Naive thymus-derived CD4-positive, alpha-beta T cell (primary cell): ENCODE measurements at regions of chr2 and their contacts with region 1.

Region 1: GRCh38 chr2:38377050-38377828 is at the start of gene ATL2:
- DNase-seq: peak; percentile 83 to 94 (median 92)
- ATAC-seq: peak; percentile 92
- H3K4me3 ChIP-seq: peak within 1 kb of the TSS; percentile 75
- H3K4me3 Mint-ChIP-seq: peak within 1 kb of the TSS; percentile 93 to 100 (median 97)
- H3K27ac ChIP-seq: peak within 1 kb of the TSS; percentile 98
- H3K27ac Mint-ChIP-seq: peak within 1 kb of the TSS; percentile 87 to 99 (median 95)
- H3K4me1 ChIP-seq: peaks cover 28 to 30% of the 10 kb centered on the region in 2 donors
- H3K4me1 Mint-ChIP-seq: peaks cover 53 to 83% (median 68%) of the 10 kb centered on the region in 7 donors
- H3K27me3 ChIP-seq: no peaks in the 10 kb centered on the region
- H3K27me3 Mint-ChIP-seq: peaks cover 0 to 3% (median 0%) of the 10 kb centered on the region in 5 donors
- total RNA-seq, gene ATL2: 45.5 to 59.5 (median 53.0) TPM

Region 2: DNA sequence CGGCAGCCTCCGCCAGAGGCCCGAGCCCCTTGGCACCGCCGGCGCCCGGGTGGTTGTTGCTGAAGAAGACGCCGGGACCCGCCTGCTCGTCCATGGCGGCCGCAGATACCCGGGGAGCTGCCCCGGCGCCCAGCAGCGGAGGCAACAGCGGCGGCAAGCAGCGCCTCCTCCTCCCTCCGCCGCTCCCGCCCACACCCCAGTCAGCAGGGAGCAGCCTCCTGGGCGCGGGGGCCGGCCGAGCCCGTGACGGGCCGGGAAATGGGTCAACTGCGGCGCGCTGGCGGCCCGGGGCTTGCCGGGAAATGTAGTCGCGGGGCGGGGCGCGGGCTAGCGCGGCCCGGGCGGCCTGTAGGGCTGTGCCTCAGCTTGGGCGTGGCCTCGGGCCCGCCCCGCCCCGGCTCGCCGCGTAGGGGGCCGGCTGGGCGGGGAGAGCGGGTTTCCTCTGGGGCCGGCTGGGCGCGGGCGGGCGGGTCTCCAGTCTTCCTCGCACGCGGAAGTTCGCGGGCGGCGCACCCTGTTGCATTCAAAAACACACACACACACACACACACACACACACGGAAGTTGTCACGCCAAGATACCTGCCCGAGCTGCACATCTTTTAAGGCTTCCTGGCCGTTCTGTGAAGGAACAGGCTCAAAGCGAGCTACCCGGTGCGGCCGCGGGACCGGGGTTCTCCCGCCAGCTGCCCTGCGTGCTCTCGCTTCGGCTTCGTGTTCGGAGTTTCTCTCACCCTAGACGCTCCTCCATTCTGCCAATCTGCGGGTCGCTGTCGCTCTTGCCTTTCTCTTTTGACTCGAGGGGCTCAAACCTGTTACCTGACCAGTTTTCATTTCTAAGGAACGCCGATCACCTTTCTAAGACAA is 1410.6 kb before region 1 on chr2 and contains the start of gene STRN:
- CTCF ChIA-PET with region 1: no interaction called
- POLR2A ChIA-PET with region 1: no interaction called
- intact Hi-C with region 1: loop called in 1 of 2 experiments (anchors 5 kb)
- DNase-seq: peak; percentile 96 to 99 (median 99)
- ATAC-seq: peak; percentile 97
- H3K4me3 ChIP-seq: peak within 1 kb of the TSS; percentile 89
- H3K4me3 Mint-ChIP-seq: peak within 1 kb of the TSS; percentile 92 to 99 (median 98)
- H3K27ac ChIP-seq: peak within 1 kb of the TSS; percentile 90
- H3K27ac Mint-ChIP-seq: peak within 1 kb of the TSS; percentile 96 to 100 (median 98)
- H3K4me1 ChIP-seq: peaks cover 8 to 19% of the 10 kb centered on the region in 2 donors
- H3K4me1 Mint-ChIP-seq: peaks cover 35 to 57% (median 48%) of the 10 kb centered on the region in 7 donors
- H3K27me3 ChIP-seq: no peaks in the 10 kb centered on the region
- H3K27me3 Mint-ChIP-seq: no peaks in the 10 kb centered on the region
- total RNA-seq, gene STRN: 23.0 to 35.0 (median 30.9) TPM

Region 3: DNA sequence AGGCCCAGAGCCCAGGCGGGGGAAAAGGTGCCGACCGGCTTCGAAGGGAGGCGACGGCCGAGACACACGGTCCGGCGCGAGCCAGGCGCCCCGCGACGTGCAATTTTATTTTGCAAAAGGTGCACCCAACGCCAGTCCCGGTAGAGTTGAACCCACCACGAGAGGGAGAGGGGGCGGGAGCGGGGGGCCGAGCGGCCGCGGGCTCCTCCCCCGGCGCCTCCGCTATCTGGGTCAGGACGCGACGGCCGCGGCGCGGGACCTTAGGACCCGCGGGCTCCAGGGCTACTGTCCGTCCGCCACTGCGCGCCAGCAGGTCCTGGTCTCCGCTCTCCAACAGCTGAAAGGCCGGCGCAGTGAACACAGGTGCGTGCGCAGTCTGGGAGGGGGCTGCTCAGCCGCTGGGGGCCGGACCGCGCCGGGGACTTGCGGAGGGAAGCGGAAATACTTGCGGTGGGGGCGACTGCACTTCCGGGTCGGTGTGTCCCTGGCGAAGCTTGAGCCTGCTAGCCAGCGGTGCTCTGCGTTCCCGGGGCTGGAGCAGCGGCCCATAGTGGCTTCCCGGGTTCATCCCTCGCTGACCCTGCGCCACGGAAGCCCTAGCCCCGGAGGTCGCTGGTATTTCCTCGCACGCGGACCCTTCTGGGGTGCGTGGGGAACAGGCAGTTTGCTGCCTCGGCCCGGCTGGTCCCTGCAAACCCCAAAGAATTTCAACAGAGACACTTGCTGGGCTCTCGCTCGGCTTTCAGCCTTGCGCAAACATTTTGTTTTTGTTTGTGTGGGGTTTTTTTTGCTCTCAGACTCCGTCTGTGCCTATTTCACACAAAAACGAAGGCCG is 452.0 kb before region 1 on chr2 and contains the start of gene RMDN2:
- CTCF ChIA-PET with region 1: no interaction called
- POLR2A ChIA-PET with region 1: no interaction called
- intact Hi-C with region 1: loop called in 1 of 2 experiments (anchors 1 kb)
- DNase-seq: peak; percentile 57 to 78 (median 71)
- ATAC-seq: peak; percentile 88
- H3K4me3 ChIP-seq: peak within 1 kb of the TSS; percentile 81
- H3K4me3 Mint-ChIP-seq: peak within 1 kb of the TSS; percentile 89 to 100 (median 98)
- H3K27ac ChIP-seq: peak within 1 kb of the TSS; percentile 73
- H3K27ac Mint-ChIP-seq: peak within 1 kb of the TSS; percentile 67 to 100 (median 96)
- H3K4me1 ChIP-seq: peaks cover 0 to 8% of the 10 kb centered on the region in 2 donors
- H3K4me1 Mint-ChIP-seq: peaks cover 8 to 50% (median 24%) of the 10 kb centered on the region in 7 donors
- H3K27me3 ChIP-seq: no peaks in the 10 kb centered on the region
- H3K27me3 Mint-ChIP-seq: peaks cover 0 to 60% (median 0%) of the 10 kb centered on the region in 5 donors
- total RNA-seq, gene RMDN2: 0.39 to 8.1 (median 5.1) TPM

Region 4: GRCh38 chr2:38336619-38337018 is 40.6 kb before region 1 on chr2:
- CTCF ChIA-PET with region 1: no interaction called
- POLR2A ChIA-PET with region 1: interaction called, 4 read pairs
- intact Hi-C with region 1: loop called in 1 of 2 experiments (anchors 5 kb)
- DNase-seq: no peak
- ATAC-seq: no peak
- H3K4me3 ChIP-seq: no peak overlapping the region
- H3K4me3 Mint-ChIP-seq: no peak overlapping the region
- H3K27ac ChIP-seq: no peak overlapping the region
- H3K27ac Mint-ChIP-seq: no peak overlapping the region
- H3K4me1 ChIP-seq: no peaks in the 10 kb centered on the region
- H3K4me1 Mint-ChIP-seq: peaks cover 0 to 4% (median 0%) of the 10 kb centered on the region in 7 donors
- H3K27me3 ChIP-seq: no peaks in the 10 kb centered on the region
- H3K27me3 Mint-ChIP-seq: no peaks in the 10 kb centered on the region

Region 5: DNA sequence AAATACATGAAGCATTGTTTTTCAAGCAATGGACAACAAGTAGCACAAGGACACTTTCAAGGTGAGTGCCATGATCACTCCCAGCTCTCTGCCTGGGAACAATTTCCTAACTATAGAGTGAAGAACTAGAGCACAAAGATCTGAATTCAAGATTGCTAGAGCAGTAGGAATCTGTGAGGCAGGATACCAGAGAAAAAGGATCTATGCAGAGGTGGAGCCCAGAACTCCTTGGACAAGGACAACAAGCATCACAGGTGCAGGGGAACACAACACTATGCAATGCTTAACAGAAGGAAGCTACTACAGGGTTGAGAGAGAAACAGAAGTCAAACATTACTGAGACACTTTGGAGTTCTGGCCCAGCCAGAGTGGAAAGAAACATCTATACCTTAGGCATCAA is 24.9 kb before region 1 on chr2:
- CTCF ChIA-PET with region 1: no interaction called
- POLR2A ChIA-PET with region 1: no interaction called
- intact Hi-C with region 1: no loop called
- DNase-seq: no peak
- ATAC-seq: no peak
- H3K4me3 ChIP-seq: no peak overlapping the region
- H3K4me3 Mint-ChIP-seq: peak overlapping the region in 2 of 10 donors; percentile 0 to 37
- H3K27ac ChIP-seq: no peak overlapping the region
- H3K27ac Mint-ChIP-seq: peak overlapping the region in 4 of 9 donors; percentile 5 to 88 (median 38)
- H3K4me1 ChIP-seq: peaks cover 0 to 9% of the 10 kb centered on the region in 2 donors
- H3K4me1 Mint-ChIP-seq: peaks cover 19 to 35% (median 30%) of the 10 kb centered on the region in 7 donors
- H3K27me3 ChIP-seq: no peaks in the 10 kb centered on the region
- H3K27me3 Mint-ChIP-seq: no peaks in the 10 kb centered on the region

Region 6: DNA sequence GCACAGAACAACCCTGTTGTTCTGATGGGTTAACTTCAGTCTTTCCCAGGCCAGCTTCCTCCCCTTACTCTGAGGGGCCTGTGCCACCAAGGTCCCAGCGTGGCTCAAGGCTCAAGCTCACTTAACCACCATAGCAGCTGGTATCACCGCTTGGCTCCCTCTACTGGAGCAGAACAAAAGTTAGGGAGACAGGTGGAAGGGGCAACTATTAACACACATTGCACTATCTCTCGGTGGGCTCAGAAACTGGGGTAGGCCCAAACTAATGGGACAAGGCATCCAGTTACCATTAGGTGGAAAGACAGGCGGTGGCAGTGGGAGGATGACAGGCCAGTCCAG is 88.5 kb after region 1 on chr2:
- CTCF ChIA-PET with region 1: no interaction called
- POLR2A ChIA-PET with region 1: interaction called, 3 read pairs
- intact Hi-C with region 1: loop called (anchors 1 kb)
- DNase-seq: peak in 6 of 9 donors; percentile 2 to 23 (median 14)
- ATAC-seq: peak; percentile 45
- H3K4me3 ChIP-seq: no peak overlapping the region
- H3K4me3 Mint-ChIP-seq: no peak overlapping the region
- H3K27ac ChIP-seq: no peak overlapping the region
- H3K27ac Mint-ChIP-seq: peak overlapping the region in 2 of 9 donors; percentile 35 to 66
- H3K4me1 ChIP-seq: no peaks in the 10 kb centered on the region
- H3K4me1 Mint-ChIP-seq: peaks cover 0 to 5% (median 0%) of the 10 kb centered on the region in 7 donors
- H3K27me3 ChIP-seq: no peaks in the 10 kb centered on the region
- H3K27me3 Mint-ChIP-seq: peaks cover 0 to 16% (median 0%) of the 10 kb centered on the region in 5 donors

Region 7: DNA sequence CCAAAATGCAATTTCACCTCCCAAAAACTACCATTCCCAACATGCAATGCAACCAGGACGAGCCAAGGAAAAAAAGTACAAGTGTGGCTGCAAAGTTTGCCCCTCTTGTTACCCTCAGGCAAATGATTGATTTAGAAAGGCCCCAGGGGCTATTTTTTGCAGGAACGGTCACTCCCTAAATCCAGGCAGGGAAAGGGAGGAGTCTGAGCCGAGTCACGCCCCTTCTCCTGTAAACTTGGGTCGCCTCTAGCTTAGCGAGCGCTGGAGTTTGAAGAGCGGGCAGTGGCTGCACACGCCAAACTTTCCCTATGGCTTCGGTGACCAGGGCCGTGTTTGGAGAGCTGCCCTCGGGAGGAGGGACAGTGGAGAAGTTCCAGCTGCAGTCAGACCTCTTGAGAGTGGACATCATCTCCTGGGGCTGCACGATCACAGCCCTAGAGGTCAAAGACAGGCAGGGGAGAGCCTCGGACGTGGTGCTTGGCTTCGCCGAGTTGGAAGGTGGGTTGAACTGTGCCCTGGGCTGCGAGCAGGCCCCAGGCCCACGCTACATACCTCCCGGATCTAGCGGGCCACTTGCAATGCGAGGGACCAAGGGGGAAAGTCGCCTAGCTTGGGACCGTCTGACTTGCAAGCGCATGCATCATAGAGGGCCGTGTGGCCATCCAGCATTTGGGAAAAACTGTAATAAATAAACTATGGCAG is 288.8 kb after region 1 on chr2 and contains the start of gene GALM:
- CTCF ChIA-PET with region 1: no interaction called
- POLR2A ChIA-PET with region 1: no interaction called
- intact Hi-C with region 1: loop called in 1 of 2 experiments (anchors 1 kb)
- DNase-seq: peak; percentile 8 to 57 (median 47)
- ATAC-seq: peak; percentile 39
- H3K4me3 ChIP-seq: peak within 1 kb of the TSS; percentile 76
- H3K4me3 Mint-ChIP-seq: peak within 1 kb of the TSS; percentile 85 to 97 (median 90)
- H3K27ac ChIP-seq: peak within 1 kb of the TSS; percentile 75
- H3K27ac Mint-ChIP-seq: peak within 1 kb of the TSS; percentile 82 to 96 (median 92)
- H3K4me1 ChIP-seq: peaks cover 9 to 43% of the 10 kb centered on the region in 2 donors
- H3K4me1 Mint-ChIP-seq: peaks cover 30 to 72% (median 53%) of the 10 kb centered on the region in 7 donors
- H3K27me3 ChIP-seq: no peaks in the 10 kb centered on the region
- H3K27me3 Mint-ChIP-seq: no peaks in the 10 kb centered on the region
- total RNA-seq, gene GALM: 4.3 to 52.5 (median 14.4) TPM

Region 8: GRCh38 chr2:39436592-39437510 is 1059.6 kb after region 1 on chr2 and contains the start of gene MAP4K3:
- CTCF ChIA-PET with region 1: no interaction called
- POLR2A ChIA-PET with region 1: no interaction called
- intact Hi-C with region 1: loop called in 1 of 2 experiments (anchors 1 kb)
- DNase-seq: peak; percentile 46 to 84 (median 54)
- ATAC-seq: peak; percentile 79
- H3K4me3 ChIP-seq: peak within 1 kb of the TSS; percentile 76
- H3K4me3 Mint-ChIP-seq: peak within 1 kb of the TSS; percentile 67 to 97 (median 91)
- H3K27ac ChIP-seq: peak within 1 kb of the TSS; percentile 64
- H3K27ac Mint-ChIP-seq: peak within 1 kb of the TSS; percentile 47 to 96 (median 87)
- H3K4me1 ChIP-seq: peaks cover 9 to 30% of the 10 kb centered on the region in 2 donors
- H3K4me1 Mint-ChIP-seq: peaks cover 35 to 57% (median 54%) of the 10 kb centered on the region in 7 donors
- H3K27me3 ChIP-seq: no peaks in the 10 kb centered on the region
- H3K27me3 Mint-ChIP-seq: no peaks in the 10 kb centered on the region
- total RNA-seq, gene MAP4K3: 14.4 to 32.2 (median 19.9) TPM